ENCODE measurements at regions of chr10 and their contacts with region 1.

Region 1: DNA sequence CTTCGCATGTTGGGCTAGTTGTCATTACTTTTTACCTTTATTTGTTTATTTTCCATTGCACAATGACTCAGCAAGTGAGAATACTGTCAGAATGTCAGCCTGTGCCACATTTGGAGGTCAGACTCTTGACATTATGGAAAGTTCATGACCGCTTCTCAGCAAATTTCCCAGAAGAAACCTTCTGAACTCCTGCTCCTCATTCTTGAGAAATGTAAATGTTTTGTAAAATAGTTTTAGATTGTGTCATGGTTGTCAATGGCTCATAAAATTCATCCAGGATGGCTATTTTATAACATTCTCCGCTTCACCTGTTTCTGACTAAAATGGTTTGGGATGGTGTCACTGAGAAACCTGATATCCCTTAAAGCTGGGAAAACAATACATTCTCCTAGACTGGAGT is 671.6 kb downstream of the GATA3 start:
- DNase-seq: peak; percentile 31 to 92
- H3K4me3 ChIP-seq: no peak overlapping the region
- H3K27ac ChIP-seq: peak overlapping the region; percentile 99
- H3K4me1 ChIP-seq: peaks cover 46% of the 10 kb centered on the region
- H3K27me3 ChIP-seq: no peaks in the 10 kb centered on the region
- CTCF ChIP-seq: no peak

Region 2: DNA sequence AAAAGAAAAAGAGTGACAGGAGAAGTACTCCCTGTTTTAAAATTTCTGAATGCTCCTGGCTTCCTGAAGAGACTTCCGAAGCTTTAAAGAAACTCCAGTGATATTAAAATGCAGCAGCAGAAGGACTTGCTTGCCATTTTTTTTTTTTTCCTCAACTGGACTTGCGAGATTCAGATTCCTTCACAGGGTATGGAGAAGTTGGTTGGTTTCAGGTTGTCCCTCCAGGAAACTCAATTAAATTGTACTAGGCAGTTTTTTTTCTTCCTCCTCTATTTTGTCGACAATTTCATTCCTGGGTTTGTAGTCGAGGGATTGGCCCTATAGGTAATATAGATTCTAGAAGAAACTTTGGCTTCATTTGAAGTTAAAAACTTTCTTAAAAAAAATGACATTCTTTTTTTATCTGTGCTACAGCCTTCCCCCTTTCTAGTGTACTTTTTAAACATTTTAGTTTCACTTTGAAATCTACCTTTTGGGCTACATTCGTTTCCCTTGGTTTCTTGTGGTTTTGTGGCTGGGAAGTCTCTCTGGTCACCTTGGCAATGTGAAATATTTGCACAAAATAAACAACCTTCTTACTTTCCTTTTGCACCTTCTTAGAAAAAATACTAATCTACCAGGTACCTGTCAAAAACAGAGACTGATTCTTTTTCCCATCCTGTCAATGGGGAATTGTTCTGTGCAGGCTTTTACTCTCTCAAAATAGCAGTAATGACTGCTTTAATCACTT is 321.5 kb before region 1 on chr10:
- CTCF ChIA-PET with region 1: no interaction called
- POLR2A ChIA-PET with region 1: no interaction called
- intact Hi-C with region 1: loop called (anchors 2 kb)
- DNase-seq: peak; percentile 24 to 77
- H3K4me3 ChIP-seq: peak overlapping the region; percentile 15; the same call in 1 of the 2 replicates
- H3K27ac ChIP-seq: peak overlapping the region; percentile 83
- H3K4me1 ChIP-seq: peaks cover 35% of the 10 kb centered on the region
- H3K27me3 ChIP-seq: no peaks in the 10 kb centered on the region
- CTCF ChIP-seq: no peak

Region 3: GRCh38 chr10:8581536-8582267 is 144.4 kb before region 1 on chr10:
- CTCF ChIA-PET with region 1: no interaction called
- POLR2A ChIA-PET with region 1: no interaction called
- intact Hi-C with region 1: loop called (anchors 2 kb)
- DNase-seq: peak; percentile 67 to 91
- H3K4me3 ChIP-seq: peak overlapping the region; percentile 26; the same call in 1 of the 2 replicates
- H3K27ac ChIP-seq: peak overlapping the region; percentile 92
- H3K4me1 ChIP-seq: peaks cover 34% of the 10 kb centered on the region
- H3K27me3 ChIP-seq: no peaks in the 10 kb centered on the region
- CTCF ChIP-seq: no peak

Region 4: GRCh38 chr10:8670423-8670822 is 55.6 kb before region 1 on chr10:
- CTCF ChIA-PET with region 1: no interaction called
- POLR2A ChIA-PET with region 1: no interaction called
- intact Hi-C with region 1: loop called (anchors 2 kb)
- DNase-seq: peak in 1 of 2 experiments; percentile 81
- H3K4me3 ChIP-seq: no peak overlapping the region
- H3K27ac ChIP-seq: peak overlapping the region; percentile 67
- H3K4me1 ChIP-seq: peaks cover 12% of the 10 kb centered on the region
- H3K27me3 ChIP-seq: no peaks in the 10 kb centered on the region
- CTCF ChIP-seq: no peak